Posterior cingulate gyrus (tissue), 11 donors: ENCODE measurements at regions of chr1 and their contacts with region 1.

Region 1: GRCh38 chr1:112619520-112620376 is at the start of gene CAPZA1:
- DNase-seq: peak; percentile 85 to 99 (median 92)

Region 2: GRCh38 chr1:112395821-112396652 is 223.7 kb before region 1 on chr1 and contains the start of gene CTTNBP2NL:
- intact Hi-C with region 1: loop called (anchors 5 kb)
- DNase-seq: peak; percentile 94 to 100 (median 98)

Region 3: GRCh38 chr1:112501810-112502641 is 117.7 kb before region 1 on chr1:
- intact Hi-C with region 1: loop called (anchors 10 kb)
- DNase-seq: peak; percentile 58 to 97 (median 81)

Region 4: GRCh38 chr1:112674439-112674985 is 54.8 kb after region 1 on chr1 and contains the start of gene MOV10:
- intact Hi-C with region 1: loop called (anchors 2 kb)
- DNase-seq: peak; percentile 25 to 95 (median 56)

Region 5: GRCh38 chr1:112706908-112707663 is 87.3 kb after region 1 on chr1 and contains the start of gene RHOC:
- intact Hi-C with region 1: loop called (anchors 5 kb)
- DNase-seq: peak; percentile 52 to 97 (median 76)

Region 6: GRCh38 chr1:112803906-112804762 is 184.4 kb after region 1 on chr1:
- intact Hi-C with region 1: loop called (anchors 5 kb)
- DNase-seq: peak; percentile 57 to 97 (median 76)